ENCODE measurements at regions of chr1 and their contacts with region 1.

Region 1: GRCh38 chr1:163315773-163316374 is 5.9 kb upstream of the NUF2 start:
- DNase-seq: peak in 12 of 14 experiments; percentile 6 to 71 (median 26)
- ATAC-seq: no peak
- H3K4me3 ChIP-seq: no peak overlapping the region
- H3K4me3 Mint-ChIP-seq: no peak overlapping the region
- H3K27ac ChIP-seq: no peak overlapping the region
- H3K27ac Mint-ChIP-seq: no peak overlapping the region
- H3K4me1 ChIP-seq: peaks cover 2% of the 10 kb centered on the region
- H3K4me1 Mint-ChIP-seq: peaks cover 4% of the 10 kb centered on the region
- H3K27me3 ChIP-seq: no peaks in the 10 kb centered on the region
- H3K27me3 Mint-ChIP-seq: no peaks in the 10 kb centered on the region
- CTCF ChIP-seq: peak; percentile 68

Region 2: GRCh38 chr1:163071405-163072255 is 244.2 kb before region 1 on chr1:
- CTCF ChIA-PET with region 1: no interaction called
- POLR2A ChIA-PET with region 1: no interaction called
- intact Hi-C with region 1: loop called (anchors 2 to 5 kb)
- DNase-seq: peak in 9 of 14 experiments; percentile 5 to 57 (median 32)
- ATAC-seq: no peak
- H3K4me3 ChIP-seq: no peak overlapping the region
- H3K4me3 Mint-ChIP-seq: no peak overlapping the region
- H3K27ac ChIP-seq: no peak overlapping the region
- H3K27ac Mint-ChIP-seq: no peak overlapping the region
- H3K4me1 ChIP-seq: no peaks in the 10 kb centered on the region
- H3K4me1 Mint-ChIP-seq: no peaks in the 10 kb centered on the region
- H3K27me3 ChIP-seq: peaks cover 23 to 44% of the 10 kb centered on the region in 2 experiments
- H3K27me3 Mint-ChIP-seq: peaks cover 77% of the 10 kb centered on the region
- CTCF ChIP-seq: no peak

Region 3: GRCh38 chr1:163195728-163196448 is 120.0 kb before region 1 on chr1:
- CTCF ChIA-PET with region 1: no interaction called
- POLR2A ChIA-PET with region 1: no interaction called
- intact Hi-C with region 1: no loop called
- DNase-seq: no peak
- ATAC-seq: no peak
- H3K4me3 ChIP-seq: no peak overlapping the region
- H3K4me3 Mint-ChIP-seq: no peak overlapping the region
- H3K27ac ChIP-seq: no peak overlapping the region
- H3K27ac Mint-ChIP-seq: no peak overlapping the region
- H3K4me1 ChIP-seq: no peaks in the 10 kb centered on the region
- H3K4me1 Mint-ChIP-seq: no peaks in the 10 kb centered on the region
- H3K27me3 ChIP-seq: no peaks in the 10 kb centered on the region
- H3K27me3 Mint-ChIP-seq: no peaks in the 10 kb centered on the region
- CTCF ChIP-seq: no peak

Region 4: DNA sequence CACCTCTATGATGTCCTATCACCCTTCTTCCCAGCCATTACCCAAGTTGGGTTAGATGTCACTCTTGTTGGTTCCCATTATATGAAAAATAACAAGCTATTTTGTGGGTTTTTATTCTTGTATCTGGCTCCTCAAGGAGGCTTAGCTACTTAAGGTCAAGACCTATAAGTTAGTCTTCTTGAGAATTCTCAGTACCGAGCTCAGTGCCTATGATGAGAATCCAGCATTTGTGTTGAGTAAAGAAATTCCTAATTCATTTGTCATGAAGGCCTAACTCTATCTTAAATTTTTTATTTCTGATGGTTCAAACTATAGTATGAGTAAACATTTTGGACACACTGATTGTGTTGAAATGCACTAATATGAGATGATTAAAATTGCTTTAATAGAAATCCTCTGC is 21.8 kb after region 1 on chr1:
- CTCF ChIA-PET with region 1: no interaction called
- POLR2A ChIA-PET with region 1: no interaction called
- intact Hi-C with region 1: no loop called
- DNase-seq: no peak
- ATAC-seq: no peak
- H3K4me3 ChIP-seq: no peak overlapping the region
- H3K4me3 Mint-ChIP-seq: no peak overlapping the region
- H3K27ac ChIP-seq: no peak overlapping the region
- H3K27ac Mint-ChIP-seq: no peak overlapping the region
- H3K4me1 ChIP-seq: no peaks in the 10 kb centered on the region
- H3K4me1 Mint-ChIP-seq: no peaks in the 10 kb centered on the region
- H3K27me3 ChIP-seq: no peaks in the 10 kb centered on the region
- H3K27me3 Mint-ChIP-seq: no peaks in the 10 kb centered on the region
- CTCF ChIP-seq: no peak

Region 5: DNA sequence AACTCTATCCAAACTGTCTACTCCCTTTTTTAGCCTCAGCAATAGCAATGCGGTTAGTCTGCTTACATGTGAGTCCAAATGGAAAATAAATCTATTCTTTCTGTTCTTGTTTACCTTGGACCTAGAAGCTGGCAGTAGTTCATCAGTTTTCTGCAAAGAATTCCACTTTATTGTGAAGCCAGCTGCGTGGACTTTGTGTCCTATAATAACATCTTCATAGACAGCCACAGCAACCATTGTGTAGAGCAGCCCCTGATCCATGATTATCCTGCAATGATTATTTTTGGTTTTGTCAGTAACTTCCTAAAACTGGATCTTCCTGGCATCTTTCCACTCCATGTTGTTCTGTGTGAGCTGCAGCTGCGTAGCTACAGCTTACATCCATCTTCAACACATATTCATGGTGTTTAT is 414.5 kb after region 1 on chr1:
- CTCF ChIA-PET with region 1: no interaction called
- POLR2A ChIA-PET with region 1: no interaction called
- intact Hi-C with region 1: no loop called
- DNase-seq: no peak
- ATAC-seq: no peak
- H3K4me3 ChIP-seq: no peak overlapping the region
- H3K4me3 Mint-ChIP-seq: no peak overlapping the region
- H3K27ac ChIP-seq: no peak overlapping the region
- H3K27ac Mint-ChIP-seq: no peak overlapping the region
- H3K4me1 ChIP-seq: no peaks in the 10 kb centered on the region
- H3K4me1 Mint-ChIP-seq: no peaks in the 10 kb centered on the region
- H3K27me3 ChIP-seq: no peaks in the 10 kb centered on the region
- H3K27me3 Mint-ChIP-seq: no peaks in the 10 kb centered on the region
- CTCF ChIP-seq: no peak

Measured in CD4-positive, alpha-beta T cell (primary cell).